Activated CD8-positive, alpha-beta T cell treated with anti-CD3 and anti-CD28 coated beads for 36 hours (primary cell): ENCODE measurements at regions of chr2 and their contacts with region 1.

Region 1: GRCh38 chr2:75646583-75647425 is at the start of gene MRPL19:
- DNase-seq: peak; percentile 81
- ATAC-seq: peak; percentile 96
- H3K4me3 Mint-ChIP-seq: peak within 1 kb of the TSS; percentile 91
- H3K27ac Mint-ChIP-seq: peak within 1 kb of the TSS; percentile 79
- H3K4me1 Mint-ChIP-seq: peaks cover 28% of the 10 kb centered on the region
- H3K27me3 Mint-ChIP-seq: no peaks in the 10 kb centered on the region
- CTCF ChIP-seq: no peak
- total RNA-seq, gene MRPL19: 64.3 to 75.4 TPM

Region 2: DNA sequence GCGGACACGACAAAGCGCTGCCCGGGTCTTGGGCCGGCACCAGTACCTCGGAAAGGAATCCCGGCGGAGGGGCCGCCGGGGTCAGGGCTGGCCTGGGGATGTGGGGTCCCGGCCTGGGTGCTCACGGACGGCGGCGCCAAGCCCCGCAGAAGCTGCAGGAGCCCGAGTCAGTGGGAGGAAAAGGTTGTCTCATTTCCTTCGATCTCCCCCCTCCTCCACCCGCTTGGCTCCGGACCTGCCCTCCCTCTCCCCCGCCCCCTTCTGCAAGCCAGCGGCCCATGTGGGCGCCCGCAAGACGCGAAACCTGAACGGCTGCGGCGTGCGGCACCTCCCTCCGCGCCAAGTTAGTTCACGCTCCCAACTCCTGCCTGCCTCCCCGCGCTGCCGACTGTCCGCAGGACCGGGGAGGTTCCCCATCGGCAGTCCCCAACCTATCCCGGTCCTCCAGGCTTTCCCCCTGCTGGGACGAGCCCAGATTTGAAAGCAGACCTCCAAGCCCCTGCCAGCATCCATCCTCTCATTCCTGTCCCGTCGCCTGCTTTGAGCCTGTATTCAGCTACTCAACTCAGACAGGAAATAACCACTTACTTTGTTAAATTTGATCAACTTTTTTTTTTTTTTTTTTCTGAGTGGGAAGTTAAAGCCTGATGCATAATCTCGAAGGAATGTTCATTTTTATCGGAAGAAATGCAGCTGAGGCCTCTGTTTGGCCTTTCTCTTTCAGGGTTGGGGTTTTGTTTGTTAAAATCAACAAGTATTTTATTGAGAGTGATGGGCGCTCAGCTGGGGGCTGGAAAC is 85.8 kb before region 1 on chr2 and contains the start of gene EVA1A:
- CTCF ChIA-PET with region 1: no interaction called
- POLR2A ChIA-PET with region 1: no interaction called
- intact Hi-C with region 1: no loop called
- DNase-seq: peak; percentile 56
- ATAC-seq: peak; percentile 67
- H3K4me3 Mint-ChIP-seq: peak within 1 kb of the TSS; percentile 71
- H3K27ac Mint-ChIP-seq: no peak within 1 kb of the TSS
- H3K4me1 Mint-ChIP-seq: peaks cover 16% of the 10 kb centered on the region
- H3K27me3 Mint-ChIP-seq: peaks cover 41% of the 10 kb centered on the region
- CTCF ChIP-seq: no peak
- total RNA-seq, gene EVA1A: 0.43 TPM in 1 of 2 experiments, not detected in the other

Region 3: DNA sequence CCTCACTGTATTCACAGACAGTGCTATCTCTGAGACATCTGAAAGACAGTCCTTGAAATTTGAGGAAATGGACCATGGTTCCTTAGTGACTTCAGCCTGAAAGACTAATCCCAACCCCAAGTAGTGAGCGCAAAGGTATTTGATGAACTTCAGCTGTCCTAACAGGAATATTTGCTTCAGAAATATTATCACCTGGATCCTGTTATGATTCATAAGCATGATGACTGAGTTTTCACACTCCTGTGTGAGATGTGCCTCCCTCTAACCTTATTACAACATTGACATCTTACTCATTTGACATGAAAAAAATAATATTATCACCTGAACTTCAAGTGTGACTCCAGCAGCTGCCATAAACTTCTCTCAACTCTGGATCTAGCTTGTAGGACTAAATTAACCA is 11.9 kb before region 1 on chr2:
- CTCF ChIA-PET with region 1: interaction called, 34 read pairs
- POLR2A ChIA-PET with region 1: interaction called, 3 read pairs
- intact Hi-C with region 1: no loop called
- DNase-seq: no peak
- ATAC-seq: no peak
- H3K4me3 Mint-ChIP-seq: no peak overlapping the region
- H3K27ac Mint-ChIP-seq: no peak overlapping the region
- H3K4me1 Mint-ChIP-seq: no peaks in the 10 kb centered on the region
- H3K27me3 Mint-ChIP-seq: peaks cover 25% of the 10 kb centered on the region
- CTCF ChIP-seq: no peak

Region 4: DNA sequence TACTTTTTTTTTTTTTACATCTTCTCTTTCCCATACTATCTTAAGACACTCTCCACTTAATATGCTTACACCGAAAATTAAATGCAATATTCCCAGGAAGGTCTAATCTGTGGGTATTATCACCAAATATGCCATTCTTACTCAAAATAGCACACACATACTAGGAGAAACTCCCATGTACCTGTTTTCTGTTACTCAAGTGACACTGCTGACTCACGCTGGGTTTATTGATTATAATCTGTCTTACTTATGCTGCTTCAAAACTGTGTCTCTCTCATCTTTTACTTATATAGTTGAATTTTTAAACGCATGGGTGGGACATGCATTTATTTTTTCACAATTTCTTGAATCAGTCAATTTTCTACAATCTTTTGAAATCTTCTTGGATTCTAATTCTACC is 29.7 kb after region 1 on chr2:
- CTCF ChIA-PET with region 1: interaction called, 64 read pairs
- POLR2A ChIA-PET with region 1: interaction called, 4 read pairs
- intact Hi-C with region 1: loop called (anchors 5 kb)
- DNase-seq: no peak
- ATAC-seq: no peak
- H3K4me3 Mint-ChIP-seq: no peak overlapping the region
- H3K27ac Mint-ChIP-seq: no peak overlapping the region
- H3K4me1 Mint-ChIP-seq: peaks cover 7% of the 10 kb centered on the region
- H3K27me3 Mint-ChIP-seq: no peaks in the 10 kb centered on the region
- CTCF ChIP-seq: no peak

Region 5: GRCh38 chr2:75710577-75711253 is 63.9 kb after region 1 on chr2 and contains the start of gene GCFC2:
- CTCF ChIA-PET with region 1: interaction called, 14 read pairs
- POLR2A ChIA-PET with region 1: interaction called, 5 read pairs
- intact Hi-C with region 1: no loop called
- DNase-seq: peak; percentile 87
- ATAC-seq: peak; percentile 92
- H3K4me3 Mint-ChIP-seq: peak within 1 kb of the TSS; percentile 76
- H3K27ac Mint-ChIP-seq: peak within 1 kb of the TSS; percentile 96
- H3K4me1 Mint-ChIP-seq: peaks cover 28% of the 10 kb centered on the region
- H3K27me3 Mint-ChIP-seq: peaks cover 2% of the 10 kb centered on the region
- CTCF ChIP-seq: no peak
- total RNA-seq, gene GCFC2: 29.8 to 36.1 TPM